ENCODE measurements at regions of chr6 and their contacts with region 1.

Region 1: DNA sequence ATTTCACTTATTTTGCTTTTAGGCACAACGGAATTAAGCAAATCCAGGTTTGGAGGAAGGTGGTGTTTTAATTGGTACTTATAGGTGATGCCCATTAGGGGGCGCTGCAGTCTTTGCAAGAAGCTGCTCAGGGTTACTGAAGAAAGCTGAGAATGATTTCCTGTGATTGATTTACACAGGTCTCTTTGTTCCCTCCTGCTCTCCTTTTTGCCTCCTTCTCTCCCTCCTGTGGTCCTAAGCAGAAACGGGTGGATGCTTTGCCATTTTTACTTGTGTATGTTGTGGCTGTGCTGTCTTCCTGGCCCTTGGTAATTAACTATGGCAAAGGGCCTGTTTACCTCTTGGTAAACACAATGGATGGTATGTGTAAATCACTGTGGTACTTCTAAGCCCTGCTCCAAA is 97.8 kb downstream of the ANKS1A start:
- DNase-seq: peak; percentile 84
- ATAC-seq: peak; percentile 66
- H3K4me3 ChIP-seq: no peak overlapping the region
- H3K27ac ChIP-seq: no peak overlapping the region
- H3K4me1 ChIP-seq: peaks cover 5% of the 10 kb centered on the region
- H3K27me3 ChIP-seq: no peaks in the 10 kb centered on the region
- CTCF ChIP-seq: peak; percentile 86
- POLR2A ChIP-seq: no peak
- RAD21 ChIP-seq: peak; percentile 94

Region 2: GRCh38 chr6:35048631-35049083 is 61.8 kb after region 1 on chr6:
- CTCF ChIA-PET with region 1: no interaction called
- POLR2A ChIA-PET with region 1: no interaction called
- dilution Hi-C with region 1: no loop called
- in situ Hi-C with region 1: no loop called
- intact Hi-C with region 1: loop called (anchors 2 kb)
- DNase-seq: peak; percentile 94
- ATAC-seq: peak; percentile 34
- H3K4me3 ChIP-seq: no peak overlapping the region
- H3K27ac ChIP-seq: peak overlapping the region; percentile 79; the same call in 1 of the 2 replicates
- H3K4me1 ChIP-seq: peaks cover 41% of the 10 kb centered on the region
- H3K27me3 ChIP-seq: no peaks in the 10 kb centered on the region
- CTCF ChIP-seq: peak; percentile 21; the same call in 1 of the 2 replicates
- POLR2A ChIP-seq: no peak
- RAD21 ChIP-seq: no peak

Region 3: GRCh38 chr6:35139908-35140655 is 153.2 kb after region 1 on chr6:
- CTCF ChIA-PET with region 1: interaction called, 10 read pairs
- POLR2A ChIA-PET with region 1: no interaction called
- dilution Hi-C with region 1: no loop called
- in situ Hi-C with region 1: loop called (anchors 5 kb)
- intact Hi-C with region 1: loop called (anchors 1 kb)
- DNase-seq: peak; percentile 82
- ATAC-seq: peak; percentile 72
- H3K4me3 ChIP-seq: no peak overlapping the region
- H3K27ac ChIP-seq: no peak overlapping the region
- H3K4me1 ChIP-seq: peaks cover 2% of the 10 kb centered on the region; the same call in 1 of the 2 replicates
- H3K27me3 ChIP-seq: no peaks in the 10 kb centered on the region
- CTCF ChIP-seq: peak; percentile 90
- POLR2A ChIP-seq: no peak; the same call in 1 of the 2 replicates
- RAD21 ChIP-seq: peak; percentile 98

Region 4: DNA sequence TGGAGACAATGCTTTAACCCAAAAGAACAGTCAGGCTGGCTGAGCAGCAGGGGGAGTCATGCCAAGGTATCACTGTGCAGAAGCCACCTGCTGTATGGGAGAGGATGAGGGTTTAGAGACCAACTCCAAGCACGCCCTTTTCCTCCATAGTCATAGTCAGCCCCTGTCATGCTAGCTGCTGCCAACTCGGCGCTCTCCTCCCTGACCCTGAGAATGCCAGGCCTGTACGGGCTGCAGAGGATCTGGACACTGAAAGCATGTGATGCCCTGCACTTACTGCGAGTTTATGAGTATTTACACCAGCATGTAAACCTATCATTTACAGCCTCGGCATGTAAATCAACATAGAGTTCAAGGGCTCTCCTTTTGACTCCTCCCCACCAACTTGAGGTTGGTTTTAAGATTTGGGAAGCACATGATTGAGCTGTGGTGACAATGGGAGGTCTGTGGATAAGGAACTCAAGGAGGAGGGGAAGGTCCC is 215.3 kb after region 1 on chr6:
- CTCF ChIA-PET with region 1: interaction called, 3 read pairs
- POLR2A ChIA-PET with region 1: no interaction called
- dilution Hi-C with region 1: no loop called
- in situ Hi-C with region 1: loop called (anchors 10 kb)
- intact Hi-C with region 1: loop called (anchors 1 kb)
- DNase-seq: no peak
- ATAC-seq: peak; percentile 16; the same call in 1 of the 2 replicates
- H3K4me3 ChIP-seq: no peak overlapping the region
- H3K27ac ChIP-seq: no peak overlapping the region
- H3K4me1 ChIP-seq: peaks cover 7% of the 10 kb centered on the region
- H3K27me3 ChIP-seq: peaks cover 2% of the 10 kb centered on the region; the same call in 1 of the 2 replicates
- CTCF ChIP-seq: no peak
- POLR2A ChIP-seq: no peak
- RAD21 ChIP-seq: no peak

Region 5: GRCh38 chr6:35240840-35241801 is 254.3 kb after region 1 on chr6:
- CTCF ChIA-PET with region 1: no interaction called
- POLR2A ChIA-PET with region 1: no interaction called
- dilution Hi-C with region 1: no loop called
- in situ Hi-C with region 1: loop called (anchors 5 kb)
- intact Hi-C with region 1: loop called (anchors 1 kb)
- DNase-seq: peak; percentile 44
- ATAC-seq: peak; percentile 87
- H3K4me3 ChIP-seq: no peak overlapping the region
- H3K27ac ChIP-seq: no peak overlapping the region
- H3K4me1 ChIP-seq: peaks cover 5% of the 10 kb centered on the region; the same call in 1 of the 2 replicates
- H3K27me3 ChIP-seq: no peaks in the 10 kb centered on the region
- CTCF ChIP-seq: peak; percentile 94
- POLR2A ChIP-seq: no peak
- RAD21 ChIP-seq: peak; percentile 96

Region 6: GRCh38 chr6:35385457-35386202 is 398.8 kb after region 1 on chr6:
- CTCF ChIA-PET with region 1: no interaction called
- POLR2A ChIA-PET with region 1: no interaction called
- dilution Hi-C with region 1: no loop called
- in situ Hi-C with region 1: no loop called
- intact Hi-C with region 1: no loop called
- DNase-seq: no peak
- ATAC-seq: peak; percentile 33
- H3K4me3 ChIP-seq: no peak overlapping the region
- H3K27ac ChIP-seq: peak overlapping the region; percentile 27; the same call in 1 of the 2 replicates
- H3K4me1 ChIP-seq: peaks cover 27% of the 10 kb centered on the region
- H3K27me3 ChIP-seq: no peaks in the 10 kb centered on the region
- CTCF ChIP-seq: no peak
- POLR2A ChIP-seq: no peak
- RAD21 ChIP-seq: no peak